Activated CD8-positive, alpha-beta memory T cell treated with anti-CD3 and anti-CD28 coated beads, Interleukin-2, amount 10 ng/mL, durations not matched to agents 7 days and 5 days (primary cell): ENCODE measurements at regions of chr20 and their contacts with region 1.

Region 1: GRCh38 chr20:47610247-47610944 is 108.7 kb downstream of the NCOA3 start:
- DNase-seq: peak; percentile 94
- ATAC-seq: peak; percentile 91
- H3K4me3 Mint-ChIP-seq: peak overlapping the region; percentile 52
- H3K27ac Mint-ChIP-seq: peak overlapping the region; percentile 91
- H3K4me1 Mint-ChIP-seq: peaks cover 75% of the 10 kb centered on the region
- H3K27me3 Mint-ChIP-seq: no peaks in the 10 kb centered on the region

Region 2: DNA sequence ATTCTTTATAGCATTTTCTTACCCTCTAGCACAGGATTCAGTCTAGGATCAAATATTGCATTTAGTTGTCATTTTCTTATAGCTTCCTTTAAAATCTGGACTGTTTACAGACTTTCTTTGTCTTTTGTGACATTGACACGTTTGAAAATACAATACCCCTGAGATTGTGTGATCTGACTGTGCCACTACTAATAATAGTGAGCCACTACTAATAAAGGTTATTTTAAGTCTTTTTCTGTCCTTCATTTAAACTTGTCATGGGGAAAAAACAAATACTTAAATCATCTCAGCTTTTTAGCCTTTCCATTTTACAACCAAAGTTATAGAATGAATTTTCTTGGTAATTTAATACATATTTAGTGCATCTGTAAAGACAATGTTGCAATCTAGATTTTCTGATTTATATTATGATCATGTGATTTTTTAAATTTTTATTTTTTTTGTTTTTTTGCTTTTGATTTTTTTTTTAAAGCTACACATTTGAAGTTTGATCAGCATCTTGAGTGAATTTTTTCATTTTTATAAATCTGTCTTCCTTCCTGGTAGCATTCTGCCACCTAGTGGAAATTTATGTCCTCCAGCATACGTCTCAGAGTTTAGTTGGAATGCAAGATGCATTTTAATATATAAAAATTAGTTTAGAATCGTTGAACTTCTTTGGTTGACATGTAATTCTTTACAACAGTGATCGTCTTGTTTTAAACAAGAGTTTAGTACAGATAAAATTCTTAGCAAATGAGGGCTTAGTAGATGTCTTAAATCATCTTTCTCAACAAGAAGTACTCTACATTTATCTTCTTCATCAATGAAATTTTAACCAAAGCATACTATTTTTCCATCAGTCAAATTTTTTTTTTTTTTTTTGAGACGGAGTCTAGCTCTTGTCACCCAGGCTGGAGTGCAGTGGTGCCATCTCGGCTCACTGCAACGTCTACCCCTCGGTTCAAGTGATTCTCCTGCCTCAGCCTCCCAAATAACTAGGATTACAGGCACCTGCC is 10.7 kb after region 1 on chr20:
- CTCF ChIA-PET with region 1: interaction called, 37 read pairs
- DNase-seq: no peak
- ATAC-seq: peak; percentile 49
- H3K4me3 Mint-ChIP-seq: no peak overlapping the region
- H3K27ac Mint-ChIP-seq: peak overlapping the region; percentile 9
- H3K4me1 Mint-ChIP-seq: peaks cover 46% of the 10 kb centered on the region
- H3K27me3 Mint-ChIP-seq: no peaks in the 10 kb centered on the region

Region 3: GRCh38 chr20:47635256-47635655 is 24.9 kb after region 1 on chr20:
- CTCF ChIA-PET with region 1: no interaction called
- DNase-seq: no peak
- ATAC-seq: no peak
- H3K4me3 Mint-ChIP-seq: no peak overlapping the region
- H3K27ac Mint-ChIP-seq: no peak overlapping the region
- H3K4me1 Mint-ChIP-seq: no peaks in the 10 kb centered on the region
- H3K27me3 Mint-ChIP-seq: no peaks in the 10 kb centered on the region

Region 4: DNA sequence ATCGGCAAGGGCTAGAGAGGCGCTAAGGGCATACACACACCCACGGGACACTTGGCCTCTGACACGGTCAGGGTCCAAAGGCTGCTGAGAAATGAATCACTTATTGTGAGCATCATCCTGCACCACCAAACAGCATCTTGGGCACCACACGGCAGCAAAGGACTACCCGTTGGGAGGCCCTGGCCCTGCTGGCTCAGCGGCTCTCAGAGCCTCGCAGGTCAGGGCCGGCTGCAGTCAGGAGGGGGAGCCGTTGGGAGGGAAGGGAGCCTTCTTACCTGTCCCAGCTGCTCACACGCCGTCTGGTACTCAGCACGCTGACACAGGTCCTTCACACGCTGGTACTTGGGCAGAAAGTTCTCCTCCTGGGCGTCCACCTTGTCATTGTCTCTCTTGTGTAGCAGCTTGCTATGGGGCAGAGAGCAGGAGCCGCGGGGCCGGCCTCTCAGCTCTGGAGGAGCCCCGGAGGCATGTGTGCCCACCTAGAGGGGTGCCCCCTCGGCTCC is 65.9 kb after region 1 on chr20:
- CTCF ChIA-PET with region 1: no interaction called
- DNase-seq: no peak
- ATAC-seq: no peak
- H3K4me3 Mint-ChIP-seq: no peak overlapping the region
- H3K27ac Mint-ChIP-seq: no peak overlapping the region
- H3K4me1 Mint-ChIP-seq: no peaks in the 10 kb centered on the region
- H3K27me3 Mint-ChIP-seq: no peaks in the 10 kb centered on the region